Heart right ventricle (tissue), 16 donors: ENCODE measurements at regions of chr3 and their contacts with region 1.

Region 1: GRCh38 chr3:104673981-104674380 is 692.7 kb upstream of the ALCAM start:
- DNase-seq: no peak
- ATAC-seq: no peak
- H3K4me3 ChIP-seq: no peak overlapping the region
- H3K27ac ChIP-seq: no peak overlapping the region
- H3K4me1 ChIP-seq: no peaks in the 10 kb centered on the region
- H3K27me3 ChIP-seq: no peaks in the 10 kb centered on the region
- CTCF ChIP-seq: no peak

Region 2: GRCh38 chr3:102796804-102797203 is 1877.2 kb before region 1 on chr3:
- intact Hi-C with region 1: no loop called
- DNase-seq: no peak
- ATAC-seq: no peak
- H3K4me3 ChIP-seq: no peak overlapping the region
- H3K27ac ChIP-seq: no peak overlapping the region
- H3K4me1 ChIP-seq: no peaks in the 10 kb centered on the region
- H3K27me3 ChIP-seq: no peaks in the 10 kb centered on the region
- CTCF ChIP-seq: no peak

Region 3: DNA sequence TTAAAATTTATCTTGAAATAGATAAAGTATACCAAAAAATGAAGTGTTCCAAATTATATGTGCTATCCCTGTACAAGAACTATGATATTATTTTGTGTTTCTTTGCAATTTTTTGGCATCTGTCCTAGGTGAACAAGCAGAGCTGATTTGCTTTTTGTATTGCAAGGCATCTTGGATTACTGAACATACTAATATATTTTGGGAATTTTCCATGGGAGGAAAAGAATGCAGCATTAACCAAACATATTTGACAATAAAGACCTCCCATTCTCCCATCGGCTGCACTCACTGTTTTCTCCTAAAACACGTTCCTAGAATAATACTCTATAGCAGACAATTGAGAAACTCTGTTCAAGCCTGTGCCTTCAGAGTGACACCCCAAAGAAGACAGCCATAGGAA is 427.6 kb after region 1 on chr3:
- intact Hi-C with region 1: loop called in 1 of 10 experiments (anchors 5 kb)
- DNase-seq: no peak
- ATAC-seq: no peak
- H3K4me3 ChIP-seq: no peak overlapping the region
- H3K27ac ChIP-seq: no peak overlapping the region
- H3K4me1 ChIP-seq: no peaks in the 10 kb centered on the region
- H3K27me3 ChIP-seq: no peaks in the 10 kb centered on the region
- CTCF ChIP-seq: no peak